Dendritic cell treated with granulocyte-macrophage colony-stimulating factor and Interleukin-4, amounts not matched to agents 40 ng/mL and 50 ng/mL, for 4 days (primary cell): ENCODE measurements at regions of chr5 and their contacts with region 1.

Region 1: DNA sequence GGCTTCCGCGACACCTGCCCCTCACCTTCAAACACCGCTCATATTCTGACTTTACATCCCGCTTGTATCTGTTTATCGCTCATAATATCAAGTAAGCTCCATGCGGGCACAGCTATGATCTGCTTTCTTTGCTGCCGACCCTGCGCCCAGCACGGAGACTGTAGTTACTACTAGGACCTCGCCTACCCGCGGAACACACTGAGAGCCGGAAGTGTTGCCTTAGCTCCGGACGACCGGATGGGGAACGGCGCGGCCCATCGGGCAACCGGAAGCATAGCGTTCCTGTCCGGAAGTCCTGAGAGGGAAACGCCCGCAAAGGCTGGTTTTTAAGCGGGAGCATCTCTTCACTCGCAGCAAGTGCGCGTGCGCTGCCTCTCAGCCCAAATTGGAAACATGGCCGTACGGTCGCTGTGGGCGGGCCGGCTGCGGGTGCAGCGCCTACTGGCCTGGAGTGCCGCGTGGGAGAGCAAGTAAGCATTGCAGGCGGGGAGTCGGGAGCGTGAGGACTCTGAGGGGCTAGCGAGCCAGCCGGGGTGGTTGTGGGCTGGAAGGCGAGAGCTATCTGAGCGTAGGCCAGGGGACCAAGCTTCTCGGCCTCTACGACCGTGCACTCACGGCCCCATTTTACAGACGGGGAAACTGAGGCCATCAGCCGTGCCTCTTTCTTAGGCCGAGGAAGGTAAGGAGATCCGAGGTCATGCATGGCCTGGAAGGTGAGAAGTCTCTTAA is at the start of gene GRPEL2:
- H3K4me3 Mint-ChIP-seq: peak within 1 kb of the TSS; percentile 89
- H3K27ac Mint-ChIP-seq: peak within 1 kb of the TSS; percentile 97
- H3K4me1 Mint-ChIP-seq: peaks cover 37% of the 10 kb centered on the region
- H3K27me3 Mint-ChIP-seq: no peaks in the 10 kb centered on the region

Region 2: DNA sequence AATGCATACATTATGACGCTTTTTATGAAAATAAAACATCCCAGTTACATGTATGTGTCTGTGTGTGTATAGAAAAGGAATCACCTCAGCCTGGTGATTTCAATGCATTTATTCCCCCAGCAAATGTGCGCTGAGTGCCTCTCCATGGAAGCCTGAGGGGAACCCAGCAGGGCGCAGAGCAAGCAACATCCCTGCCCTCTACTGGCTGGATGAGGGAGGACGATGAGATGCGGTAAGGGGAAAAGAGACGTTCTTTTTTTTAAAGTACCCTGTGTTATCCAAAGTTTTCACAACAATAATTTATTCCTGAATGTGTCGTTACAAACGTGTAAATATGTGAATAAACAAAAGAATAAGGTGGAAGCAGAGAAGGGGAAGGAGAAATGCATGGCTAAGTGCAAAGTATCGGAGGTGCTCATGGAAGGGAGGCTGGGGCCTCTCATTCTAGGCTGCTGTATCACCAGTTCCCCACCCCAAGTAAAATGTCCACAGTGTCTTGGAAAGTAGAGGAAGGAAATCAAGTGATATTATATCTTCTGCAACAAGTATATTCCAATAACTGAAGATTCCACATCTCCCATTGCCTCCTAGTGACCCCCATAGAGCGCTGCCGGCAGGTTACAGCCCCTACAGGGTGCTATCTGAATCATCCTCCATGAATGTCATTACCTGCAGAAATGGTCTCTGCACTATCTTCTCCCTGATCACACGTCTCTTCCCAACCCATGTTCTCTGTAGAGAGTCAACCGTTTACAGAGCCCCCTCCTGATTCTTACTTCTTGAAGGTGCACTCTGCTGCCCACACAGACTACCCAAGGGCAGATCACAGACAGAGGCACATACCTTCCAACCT is 217.1 kb before region 1 on chr5:
- intact Hi-C with region 1: no loop called
- H3K4me3 Mint-ChIP-seq: no peak overlapping the region
- H3K27ac Mint-ChIP-seq: no peak overlapping the region
- H3K4me1 Mint-ChIP-seq: peaks cover 7% of the 10 kb centered on the region
- H3K27me3 Mint-ChIP-seq: no peaks in the 10 kb centered on the region

Region 3: DNA sequence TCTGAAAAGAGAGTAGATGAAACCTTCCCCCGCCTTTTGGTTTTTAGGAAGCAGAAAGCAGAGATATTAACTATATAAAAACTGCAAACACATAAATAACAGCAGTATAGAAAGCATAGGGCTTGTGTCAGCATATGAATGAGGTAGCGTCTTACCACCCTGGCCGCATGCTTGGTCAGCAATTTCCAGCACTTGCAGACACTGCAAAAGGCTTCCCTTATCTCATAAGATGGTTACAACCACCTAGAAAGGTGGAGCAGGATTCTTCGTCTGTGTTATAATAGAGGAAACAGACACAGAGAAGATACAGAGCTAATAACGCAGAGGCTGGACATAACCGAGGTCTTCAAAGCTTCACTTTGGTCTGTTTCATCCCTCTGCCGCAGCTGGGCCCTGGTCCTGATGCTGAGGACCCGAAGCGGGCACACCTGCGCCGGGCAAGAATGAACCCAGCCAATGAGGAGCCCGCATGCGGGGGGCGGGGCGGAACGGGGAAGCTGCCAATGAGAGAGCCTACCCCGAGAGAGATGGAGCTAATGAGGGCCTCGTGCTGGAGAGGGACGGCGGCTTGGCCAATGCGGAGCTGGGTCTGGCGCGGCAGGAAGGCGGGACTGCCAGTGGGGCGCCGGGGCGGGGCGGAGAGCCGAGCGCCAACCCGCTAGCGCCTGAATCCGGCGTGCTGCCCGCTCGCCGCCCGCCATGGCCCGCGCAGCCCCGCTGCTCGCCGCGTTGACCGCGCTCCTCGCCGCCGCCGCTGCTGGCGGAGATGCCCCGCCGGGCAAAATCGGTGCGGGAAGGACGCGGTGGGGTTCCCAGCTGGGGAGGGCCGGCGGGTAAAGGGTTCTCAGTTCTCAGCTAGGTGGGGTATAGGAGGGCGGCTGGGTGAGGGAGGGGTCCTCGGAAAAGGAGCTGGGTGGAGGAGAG is 12.3 kb after region 1 on chr5 and contains the start of gene PCYOX1L:
- intact Hi-C with region 1: loop called (anchors 2 kb)
- H3K4me3 Mint-ChIP-seq: peak within 1 kb of the TSS; percentile 94
- H3K27ac Mint-ChIP-seq: peak within 1 kb of the TSS; percentile 83
- H3K4me1 Mint-ChIP-seq: peaks cover 32% of the 10 kb centered on the region
- H3K27me3 Mint-ChIP-seq: no peaks in the 10 kb centered on the region